Activated CD8-positive, alpha-beta T cell treated with anti-CD3 and anti-CD28 coated beads for 36 hours (primary cell): ENCODE measurements at regions of chr6 and their contacts with region 1.

Region 1: DNA sequence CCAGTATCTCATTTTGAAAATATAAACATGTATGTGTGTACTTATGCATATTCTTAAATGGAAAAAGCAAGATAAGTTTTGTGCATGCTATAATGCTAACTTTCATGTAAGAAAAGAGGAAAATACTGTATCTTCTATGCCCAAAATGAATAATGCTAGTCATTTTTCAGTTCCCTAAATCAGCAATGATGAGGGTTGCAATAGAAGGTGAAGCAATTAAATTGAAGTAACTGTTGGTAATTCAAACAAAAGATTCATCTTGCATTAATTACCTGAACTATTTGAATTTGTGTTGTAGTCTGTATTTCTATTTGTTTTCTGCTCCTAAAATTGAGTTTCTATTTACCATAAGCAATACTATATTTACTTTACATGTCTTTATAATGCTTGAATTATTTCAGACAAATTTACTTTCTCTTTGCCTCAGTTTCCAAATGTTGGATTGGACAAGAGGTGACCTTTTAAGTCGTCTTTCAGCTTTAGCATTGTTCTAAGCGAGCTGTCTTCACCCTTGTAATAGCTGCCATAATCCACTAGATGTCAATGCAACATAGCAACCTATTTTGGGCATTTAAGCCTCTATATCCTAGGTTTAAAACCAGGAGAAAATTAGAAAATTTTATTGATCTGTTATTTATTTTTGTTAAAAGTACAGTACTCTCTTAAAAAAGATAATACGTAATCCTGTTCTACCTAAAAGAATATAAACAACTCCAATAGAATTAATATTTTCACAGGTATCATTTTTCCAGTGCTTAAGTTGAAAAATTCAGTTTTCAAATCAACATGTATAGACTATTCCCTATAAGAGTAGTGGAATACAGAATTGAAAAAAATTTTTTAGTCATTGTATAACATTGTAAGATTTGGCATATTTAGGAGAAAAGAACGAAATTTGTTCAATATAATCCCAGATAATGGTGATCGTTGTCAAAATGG is 52.3 kb upstream of the IFNGR1 start:
- DNase-seq: no peak
- ATAC-seq: peak; percentile 74
- H3K4me3 Mint-ChIP-seq: no peak overlapping the region
- H3K27ac Mint-ChIP-seq: no peak overlapping the region
- H3K4me1 Mint-ChIP-seq: peaks cover 10% of the 10 kb centered on the region
- H3K27me3 Mint-ChIP-seq: peaks cover 6% of the 10 kb centered on the region
- CTCF ChIP-seq: peak; percentile 90

Region 2: GRCh38 chr6:136967876-136968752 is 303.4 kb before region 1 on chr6:
- CTCF ChIA-PET with region 1: no interaction called
- POLR2A ChIA-PET with region 1: no interaction called
- intact Hi-C with region 1: no loop called
- DNase-seq: peak; percentile 81
- ATAC-seq: peak; percentile 91
- H3K4me3 Mint-ChIP-seq: no peak overlapping the region
- H3K27ac Mint-ChIP-seq: no peak overlapping the region
- H3K4me1 Mint-ChIP-seq: peaks cover 3% of the 10 kb centered on the region
- H3K27me3 Mint-ChIP-seq: peaks cover 20% of the 10 kb centered on the region
- CTCF ChIP-seq: peak; percentile 67

Region 3: GRCh38 chr6:137076277-137077068 is 195.0 kb before region 1 on chr6:
- CTCF ChIA-PET with region 1: interaction called, 13 read pairs
- POLR2A ChIA-PET with region 1: no interaction called
- intact Hi-C with region 1: no loop called
- DNase-seq: peak; percentile 70
- ATAC-seq: peak; percentile 90
- H3K4me3 Mint-ChIP-seq: no peak overlapping the region
- H3K27ac Mint-ChIP-seq: no peak overlapping the region
- H3K4me1 Mint-ChIP-seq: no peaks in the 10 kb centered on the region
- H3K27me3 Mint-ChIP-seq: peaks cover 7% of the 10 kb centered on the region
- CTCF ChIP-seq: peak; percentile 64

Region 4: GRCh38 chr6:137415127-137415833 is 143.8 kb after region 1 on chr6:
- CTCF ChIA-PET with region 1: interaction called, 10 read pairs
- POLR2A ChIA-PET with region 1: no interaction called
- intact Hi-C with region 1: no loop called
- DNase-seq: peak; percentile 76
- ATAC-seq: peak; percentile 97
- H3K4me3 Mint-ChIP-seq: peak overlapping the region; percentile 72
- H3K27ac Mint-ChIP-seq: peak overlapping the region; percentile 58
- H3K4me1 Mint-ChIP-seq: peaks cover 8% of the 10 kb centered on the region
- H3K27me3 Mint-ChIP-seq: no peaks in the 10 kb centered on the region
- CTCF ChIP-seq: peak; percentile 78

Region 5: DNA sequence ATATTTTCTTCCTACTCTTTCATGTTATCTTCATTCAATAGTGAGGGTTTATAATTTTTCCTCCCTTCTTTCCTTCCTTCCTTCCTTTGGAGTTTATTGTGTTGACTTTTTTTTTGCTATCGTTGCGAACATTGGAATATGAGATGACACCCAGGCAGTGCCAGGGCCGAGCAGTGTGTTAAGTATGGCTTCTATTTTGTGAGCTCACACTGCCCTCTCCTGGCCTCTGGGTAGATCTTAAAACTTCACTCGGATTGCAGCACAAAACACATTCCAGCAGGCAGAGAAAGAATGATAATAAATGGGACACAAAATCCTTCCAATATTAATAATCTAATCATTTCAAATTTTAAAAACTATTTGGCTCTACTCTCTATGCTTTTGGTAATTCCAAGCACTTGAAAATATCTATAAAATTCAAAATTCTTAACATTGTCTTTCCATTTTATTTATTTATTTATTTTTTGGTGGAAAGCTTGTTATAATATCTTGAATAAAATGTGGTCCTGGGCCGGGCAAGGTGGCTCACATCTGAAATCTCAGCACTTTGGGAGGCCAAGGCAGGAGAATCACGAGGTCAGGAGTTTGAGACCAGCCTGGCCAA is 370.1 kb after region 1 on chr6:
- CTCF ChIA-PET with region 1: interaction called, 4 read pairs
- POLR2A ChIA-PET with region 1: no interaction called
- intact Hi-C with region 1: loop called (anchors 5 kb)
- DNase-seq: peak; percentile 83
- ATAC-seq: peak; percentile 75
- H3K4me3 Mint-ChIP-seq: no peak overlapping the region
- H3K27ac Mint-ChIP-seq: no peak overlapping the region
- H3K4me1 Mint-ChIP-seq: peaks cover 15% of the 10 kb centered on the region
- H3K27me3 Mint-ChIP-seq: peaks cover 7% of the 10 kb centered on the region
- CTCF ChIP-seq: peak; percentile 90